Gastrocnemius medialis (tissue), 4 donors: ENCODE measurements at regions of chr10 and their contacts with region 1.

Region 1: GRCh38 chr10:113854011-113854760 is at the starts of genes DCLRE1A and NHLRC2:
- DNase-seq: peak; percentile 60 to 71
- ATAC-seq: peak; percentile 86 to 90
- H3K4me3 ChIP-seq: peak within 1 kb of the TSS; percentile 74 to 99 (median 94)
- H3K27ac ChIP-seq: peak within 1 kb of the TSS; percentile 90 to 96 (median 94)
- H3K4me1 ChIP-seq: peaks cover 58 to 66% of the 10 kb centered on the region in 2 donors
- H3K27me3 ChIP-seq: no peaks in the 10 kb centered on the region
- CTCF ChIP-seq: no peak
- POLR2A ChIP-seq: peak in 1 of 2 donors; percentile 17
- total RNA-seq, gene DCLRE1A: 2.6 to 4.7 (median 3.8) TPM
- total RNA-seq, gene NHLRC2: 11.4 to 109 (median 40.7) TPM

Region 2: DNA sequence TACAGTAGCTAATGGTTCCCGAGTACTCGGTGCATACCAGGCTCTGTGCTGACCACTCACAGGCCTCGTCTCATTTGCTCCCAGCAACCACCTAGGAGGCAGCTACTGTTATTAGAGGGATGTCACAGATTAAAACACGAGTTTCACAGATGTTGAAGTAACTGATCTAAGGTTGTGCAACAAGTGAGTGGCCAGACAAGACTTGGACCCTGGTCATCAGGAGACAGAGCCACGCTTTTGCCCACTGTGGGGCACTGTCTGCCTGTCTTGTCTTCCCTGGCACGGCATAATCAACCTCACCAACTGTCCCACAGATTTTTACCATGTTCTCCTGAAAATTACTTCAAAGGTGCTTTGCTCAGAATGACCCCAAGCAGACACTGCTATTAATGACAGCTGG is 413.0 kb before region 1 on chr10:
- in situ Hi-C with region 1: no loop called
- intact Hi-C with region 1: no loop called
- DNase-seq: no peak
- ATAC-seq: no peak
- H3K4me3 ChIP-seq: no peak overlapping the region
- H3K27ac ChIP-seq: no peak overlapping the region
- H3K4me1 ChIP-seq: no peaks in the 10 kb centered on the region
- H3K27me3 ChIP-seq: no peaks in the 10 kb centered on the region
- CTCF ChIP-seq: no peak
- POLR2A ChIP-seq: no peak

Region 3: DNA sequence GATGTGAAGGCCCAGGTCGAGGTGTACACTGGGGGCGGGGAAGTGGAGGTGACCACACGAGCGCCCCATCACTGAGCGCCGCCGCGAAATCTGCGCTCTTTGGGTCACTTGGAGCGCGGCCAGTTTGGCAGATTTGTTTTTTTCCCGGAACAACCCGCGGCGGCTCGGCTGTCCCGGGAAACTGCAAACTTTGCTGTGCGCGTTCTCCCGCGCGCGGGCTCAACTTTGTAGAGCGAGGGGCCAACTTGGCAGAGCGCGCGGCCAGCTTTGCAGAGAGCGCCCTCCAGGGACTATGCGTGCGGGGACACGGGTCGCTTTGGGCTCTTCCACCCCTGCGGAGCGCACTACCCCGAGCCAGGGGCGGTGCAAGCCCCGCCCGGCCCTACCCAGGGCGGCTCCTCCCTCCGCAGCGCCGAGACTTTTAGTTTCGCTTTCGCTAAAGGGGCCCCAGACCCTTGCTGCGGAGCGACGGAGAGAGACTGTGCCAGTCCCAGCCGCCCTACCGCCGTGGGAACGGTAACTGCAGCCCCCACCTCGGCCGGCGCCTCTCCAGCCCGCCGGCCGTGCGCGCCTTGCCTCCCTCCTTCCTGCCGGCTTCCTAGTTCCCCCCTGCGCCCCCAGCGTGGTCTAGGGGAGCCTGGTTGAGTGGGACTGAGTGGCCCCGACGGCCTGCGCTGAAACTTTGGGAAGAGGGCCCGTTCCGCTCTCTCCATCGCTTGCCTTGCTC is 174.6 kb before region 1 on chr10 and contains the start of gene CASP7:
- in situ Hi-C with region 1: no loop called
- intact Hi-C with region 1: loop called (anchors 10 kb)
- DNase-seq: peak; percentile 71 to 75
- ATAC-seq: peak; percentile 81 to 86
- H3K4me3 ChIP-seq: peak within 1 kb of the TSS; percentile 88 to 100 (median 95)
- H3K27ac ChIP-seq: peak within 1 kb of the TSS; percentile 96 to 99 (median 98)
- H3K4me1 ChIP-seq: peaks cover 3 to 16% of the 10 kb centered on the region in 2 donors
- H3K27me3 ChIP-seq: no peaks in the 10 kb centered on the region
- CTCF ChIP-seq: peak in 1 of 5 experiments; percentile 29
- POLR2A ChIP-seq: peak; percentile 63 to 73
- total RNA-seq, gene CASP7: 5.3 to 23.9 (median 8.9) TPM

Region 4: GRCh38 chr10:114239117-114239993 is 385.2 kb after region 1 on chr10 and contains the start of gene VWA2:
- in situ Hi-C with region 1: no loop called
- intact Hi-C with region 1: no loop called
- DNase-seq: no peak
- ATAC-seq: peak; percentile 39 to 51
- H3K4me3 ChIP-seq: peak within 1 kb of the TSS; percentile 48 to 55 (median 52)
- H3K27ac ChIP-seq: no peak within 1 kb of the TSS
- H3K4me1 ChIP-seq: peaks cover 0 to 3% of the 10 kb centered on the region in 2 donors
- H3K27me3 ChIP-seq: peaks cover 19 to 44% (median 22%) of the 10 kb centered on the region in 3 donors
- CTCF ChIP-seq: peak in 3 of 5 experiments; percentile 21 to 42 (median 27)
- POLR2A ChIP-seq: no peak
- total RNA-seq, gene VWA2: 0.20 TPM in 1 of 4 donors, not detected in the others